ENCODE measurements at regions of chr12 and their contacts with region 1.

Region 1: GRCh38 chr12:103994235-103994634 is 28.6 kb downstream of the TDG start:
- DNase-seq: no peak
- ATAC-seq: no peak
- H3K4me3 ChIP-seq: no peak overlapping the region
- H3K4me3 Mint-ChIP-seq: no peak overlapping the region
- H3K27ac ChIP-seq: no peak overlapping the region
- H3K27ac Mint-ChIP-seq: no peak overlapping the region
- H3K4me1 ChIP-seq: no peaks in the 10 kb centered on the region
- H3K4me1 Mint-ChIP-seq: no peaks in the 10 kb centered on the region
- H3K27me3 ChIP-seq: no peaks in the 10 kb centered on the region
- H3K27me3 Mint-ChIP-seq: peaks cover 4% of the 10 kb centered on the region
- CTCF ChIP-seq: no peak

Region 2: DNA sequence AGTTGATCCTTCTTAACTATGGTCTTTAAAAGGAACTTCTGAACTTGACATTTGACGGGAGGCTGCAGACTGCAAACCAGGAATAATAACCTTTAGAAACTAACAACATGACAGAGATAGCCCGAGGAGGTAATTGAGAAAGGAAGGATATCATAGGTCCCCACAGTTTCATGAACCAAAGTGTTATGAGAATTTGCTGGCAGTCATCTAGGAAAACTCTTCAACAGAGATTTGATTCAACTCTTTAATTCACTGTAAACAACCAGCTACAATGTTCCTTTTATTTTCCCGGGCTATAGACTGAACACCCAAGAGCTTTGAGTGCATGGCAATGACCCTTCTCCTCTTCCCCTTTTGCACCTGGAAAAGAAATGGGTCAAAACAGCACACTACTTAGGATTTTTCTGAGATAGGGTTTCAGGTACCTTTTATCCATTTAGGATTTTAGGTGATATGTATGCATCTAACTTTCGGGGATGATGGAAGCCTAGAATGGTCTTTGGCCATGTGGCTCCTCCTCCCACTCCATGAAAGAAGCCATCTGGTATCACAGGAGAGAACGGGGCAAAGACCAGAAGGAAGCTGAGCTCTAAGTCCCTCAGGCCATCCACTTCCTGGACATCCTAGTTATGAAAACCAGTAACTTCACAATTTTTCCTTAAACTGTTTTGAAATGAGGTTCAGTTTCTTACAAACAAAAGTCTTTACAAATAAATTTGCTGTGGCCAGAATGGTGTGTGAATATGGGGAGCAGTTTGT is 32.8 kb after region 1 on chr12:
- CTCF ChIA-PET with region 1: no interaction called
- POLR2A ChIA-PET with region 1: no interaction called
- intact Hi-C with region 1: loop called in 1 of 2 experiments (anchors 5 kb)
- DNase-seq: no peak
- ATAC-seq: no peak
- H3K4me3 ChIP-seq: no peak overlapping the region
- H3K4me3 Mint-ChIP-seq: no peak overlapping the region
- H3K27ac ChIP-seq: no peak overlapping the region
- H3K27ac Mint-ChIP-seq: no peak overlapping the region
- H3K4me1 ChIP-seq: no peaks in the 10 kb centered on the region
- H3K4me1 Mint-ChIP-seq: no peaks in the 10 kb centered on the region
- H3K27me3 ChIP-seq: no peaks in the 10 kb centered on the region
- H3K27me3 Mint-ChIP-seq: peaks cover 16% of the 10 kb centered on the region
- CTCF ChIP-seq: no peak

Region 3: GRCh38 chr12:104177663-104178501 is 183.6 kb after region 1 on chr12:
- CTCF ChIA-PET with region 1: no interaction called
- POLR2A ChIA-PET with region 1: no interaction called
- intact Hi-C with region 1: no loop called
- DNase-seq: no peak
- ATAC-seq: no peak
- H3K4me3 ChIP-seq: no peak overlapping the region
- H3K4me3 Mint-ChIP-seq: no peak overlapping the region
- H3K27ac ChIP-seq: no peak overlapping the region
- H3K27ac Mint-ChIP-seq: no peak overlapping the region
- H3K4me1 ChIP-seq: no peaks in the 10 kb centered on the region
- H3K4me1 Mint-ChIP-seq: no peaks in the 10 kb centered on the region
- H3K27me3 ChIP-seq: no peaks in the 10 kb centered on the region
- H3K27me3 Mint-ChIP-seq: no peaks in the 10 kb centered on the region
- CTCF ChIP-seq: no peak

Measured in CD4-positive, alpha-beta T cell (primary cell).